ENCODE measurements at regions of chr1 and their contacts with region 1.

Region 1: DNA sequence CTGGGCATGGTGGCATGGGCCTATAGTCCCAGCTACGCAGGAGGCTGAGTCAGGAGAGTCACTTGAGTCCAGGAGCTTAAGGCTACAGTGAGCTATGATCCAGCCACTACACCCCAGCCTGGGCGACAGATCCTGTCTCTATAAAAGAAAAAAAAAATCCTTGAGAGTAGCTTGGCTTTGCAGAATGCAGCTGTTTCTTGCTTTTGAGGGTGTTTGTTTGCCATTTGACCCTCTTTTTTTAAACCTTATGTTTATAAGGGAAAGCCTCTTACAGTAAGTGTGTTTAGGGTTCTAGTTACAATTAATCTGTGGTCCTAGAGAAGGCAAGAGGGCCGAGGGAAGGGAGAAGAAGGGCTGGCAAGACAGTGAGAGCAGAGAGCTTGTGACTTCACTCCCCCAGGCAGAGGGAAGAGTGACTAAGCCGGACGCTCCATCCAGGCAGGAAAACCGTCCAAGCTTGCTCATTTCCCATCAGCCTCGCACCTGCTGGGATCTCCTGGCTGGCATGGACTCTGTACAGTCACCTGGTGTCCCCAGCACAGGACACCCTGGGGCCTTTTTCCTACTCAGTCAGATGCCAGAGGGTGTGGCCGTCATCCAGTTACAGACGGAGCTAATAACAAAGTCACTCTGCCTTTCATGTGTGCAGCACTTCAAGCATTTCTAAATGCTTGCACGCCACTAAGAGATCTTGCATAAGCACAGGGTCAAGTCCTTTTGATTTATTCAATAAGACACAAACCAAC is 55.5 kb upstream of the PSEN2 start:
- DNase-seq: peak; percentile 100
- H3K4me3 Mint-ChIP-seq: no peak overlapping the region
- H3K27ac Mint-ChIP-seq: peak overlapping the region; percentile 89
- H3K4me1 Mint-ChIP-seq: peaks cover 18% of the 10 kb centered on the region
- H3K27me3 Mint-ChIP-seq: no peaks in the 10 kb centered on the region
- CTCF ChIP-seq: no peak

Region 2: DNA sequence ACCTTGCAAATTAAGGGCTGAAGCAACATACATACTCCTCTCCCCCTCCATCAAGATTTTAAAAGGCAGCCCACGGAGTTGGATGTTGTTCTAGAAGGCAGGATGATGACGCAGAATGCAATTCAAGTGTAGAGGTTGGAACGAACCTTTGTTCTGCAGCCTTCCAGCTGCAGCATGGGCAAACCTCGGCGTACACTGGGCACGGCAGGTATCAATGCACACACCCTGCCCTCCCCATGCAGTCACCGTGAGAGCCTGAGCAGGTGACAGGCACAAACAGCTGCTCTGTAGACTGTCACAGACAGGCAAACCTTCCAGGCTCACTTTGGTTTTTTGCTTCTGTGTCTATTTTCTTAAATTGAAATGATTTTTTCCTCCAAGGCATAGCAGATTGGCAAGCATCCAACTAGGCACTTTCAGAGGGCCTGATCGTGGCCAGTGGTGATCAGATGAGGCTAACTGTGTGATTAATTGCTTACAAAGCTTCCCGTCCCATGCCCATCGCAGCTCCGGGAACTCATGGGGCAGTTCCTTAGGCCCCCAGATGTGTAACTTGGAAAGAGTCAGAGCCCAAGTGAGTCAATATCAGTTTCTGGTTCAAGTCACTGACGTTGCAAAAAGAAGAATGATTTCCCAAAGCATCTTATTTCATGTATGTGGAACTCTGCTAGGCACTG is 158.2 kb before region 1 on chr1:
- CTCF ChIA-PET with region 1: interaction called, 3 read pairs
- POLR2A ChIA-PET with region 1: interaction called, 33 read pairs
- intact Hi-C with region 1: no loop called
- DNase-seq: peak; percentile 98
- H3K4me3 Mint-ChIP-seq: peak overlapping the region; percentile 45
- H3K27ac Mint-ChIP-seq: peak overlapping the region; percentile 75
- H3K4me1 Mint-ChIP-seq: peaks cover 32% of the 10 kb centered on the region
- H3K27me3 Mint-ChIP-seq: no peaks in the 10 kb centered on the region
- CTCF ChIP-seq: no peak

Region 3: GRCh38 chr1:226702957-226703831 is 111.7 kb before region 1 on chr1:
- CTCF ChIA-PET with region 1: interaction called, 3 read pairs
- POLR2A ChIA-PET with region 1: interaction called, 22 read pairs
- intact Hi-C with region 1: no loop called
- DNase-seq: peak; percentile 75
- H3K4me3 Mint-ChIP-seq: peak overlapping the region; percentile 62
- H3K27ac Mint-ChIP-seq: peak overlapping the region; percentile 9
- H3K4me1 Mint-ChIP-seq: peaks cover 14% of the 10 kb centered on the region
- H3K27me3 Mint-ChIP-seq: no peaks in the 10 kb centered on the region
- CTCF ChIP-seq: no peak

Region 4: GRCh38 chr1:226763905-226764264 is 51.0 kb before region 1 on chr1:
- CTCF ChIA-PET with region 1: interaction called, 5 read pairs
- POLR2A ChIA-PET with region 1: interaction called, 65 read pairs
- intact Hi-C with region 1: no loop called
- DNase-seq: peak; percentile 97
- H3K4me3 Mint-ChIP-seq: no peak overlapping the region
- H3K27ac Mint-ChIP-seq: peak overlapping the region; percentile 4
- H3K4me1 Mint-ChIP-seq: peaks cover 37% of the 10 kb centered on the region
- H3K27me3 Mint-ChIP-seq: no peaks in the 10 kb centered on the region
- CTCF ChIP-seq: no peak

Region 5: DNA sequence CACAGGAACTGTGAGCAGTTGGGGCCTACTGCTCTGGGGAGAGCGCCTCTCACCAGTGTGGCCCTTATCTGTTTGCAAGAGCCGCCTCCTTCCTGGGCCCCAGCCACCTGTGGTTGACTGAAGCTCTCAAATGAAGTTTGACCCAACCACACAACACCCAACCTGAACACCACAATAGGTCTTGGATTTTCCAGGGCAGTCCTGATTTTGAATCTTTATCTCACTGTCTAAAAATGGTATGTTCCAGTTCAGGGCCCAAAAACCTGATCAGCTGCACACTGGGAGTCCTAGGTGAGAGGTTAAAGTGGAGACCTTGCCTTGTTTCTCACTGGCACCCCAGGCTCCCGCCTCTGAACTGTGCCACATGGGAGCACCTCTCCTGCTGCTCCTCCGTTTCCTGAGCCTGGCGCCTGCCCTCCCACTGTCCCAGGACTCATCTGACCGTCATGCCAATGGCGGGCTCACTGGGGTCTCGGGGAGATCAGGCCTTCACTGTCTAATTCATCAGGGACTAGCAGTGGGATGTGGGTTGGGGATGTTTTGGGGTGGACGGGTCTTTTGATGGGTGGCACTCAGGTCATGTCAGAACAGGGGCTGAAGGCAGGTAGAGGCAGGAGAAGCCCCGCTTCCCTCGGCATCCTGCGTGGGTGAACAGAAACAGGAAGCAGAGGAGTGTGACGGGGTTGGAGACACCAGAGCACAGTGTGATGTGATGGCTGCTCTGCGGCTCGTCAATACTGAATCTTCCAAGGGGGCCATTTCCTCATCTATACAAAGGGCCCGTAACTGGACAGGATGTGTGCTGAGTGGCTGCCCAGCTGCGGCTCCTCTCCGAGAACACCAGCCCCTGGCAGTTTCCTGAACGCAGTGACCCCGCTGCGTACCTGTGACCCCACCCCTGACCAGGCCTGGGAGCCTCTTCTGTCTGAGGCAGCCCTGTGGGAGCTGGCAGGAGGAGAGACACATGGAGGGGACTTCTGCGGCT is 16.2 kb before region 1 on chr1:
- CTCF ChIA-PET with region 1: interaction called, 6 read pairs
- POLR2A ChIA-PET with region 1: interaction called, 11 read pairs
- intact Hi-C with region 1: no loop called
- DNase-seq: no peak
- H3K4me3 Mint-ChIP-seq: no peak overlapping the region
- H3K27ac Mint-ChIP-seq: peak overlapping the region; percentile 32
- H3K4me1 Mint-ChIP-seq: no peaks in the 10 kb centered on the region
- H3K27me3 Mint-ChIP-seq: peaks cover 8% of the 10 kb centered on the region
- CTCF ChIP-seq: no peak

Region 6: GRCh38 chr1:226940029-226940805 is 125.3 kb after region 1 on chr1 and contains the start of gene COQ8A:
- CTCF ChIA-PET with region 1: interaction called, 3 read pairs
- POLR2A ChIA-PET with region 1: interaction called, 12 read pairs
- intact Hi-C with region 1: no loop called
- DNase-seq: peak; percentile 100
- H3K4me3 Mint-ChIP-seq: peak within 1 kb of the TSS; percentile 92
- H3K27ac Mint-ChIP-seq: peak within 1 kb of the TSS; percentile 93
- H3K4me1 Mint-ChIP-seq: peaks cover 43% of the 10 kb centered on the region
- H3K27me3 Mint-ChIP-seq: no peaks in the 10 kb centered on the region
- CTCF ChIP-seq: no peak
- total RNA-seq, gene COQ8A: 22.1 and 26.4 TPM in 2 replicates

Region 7: DNA sequence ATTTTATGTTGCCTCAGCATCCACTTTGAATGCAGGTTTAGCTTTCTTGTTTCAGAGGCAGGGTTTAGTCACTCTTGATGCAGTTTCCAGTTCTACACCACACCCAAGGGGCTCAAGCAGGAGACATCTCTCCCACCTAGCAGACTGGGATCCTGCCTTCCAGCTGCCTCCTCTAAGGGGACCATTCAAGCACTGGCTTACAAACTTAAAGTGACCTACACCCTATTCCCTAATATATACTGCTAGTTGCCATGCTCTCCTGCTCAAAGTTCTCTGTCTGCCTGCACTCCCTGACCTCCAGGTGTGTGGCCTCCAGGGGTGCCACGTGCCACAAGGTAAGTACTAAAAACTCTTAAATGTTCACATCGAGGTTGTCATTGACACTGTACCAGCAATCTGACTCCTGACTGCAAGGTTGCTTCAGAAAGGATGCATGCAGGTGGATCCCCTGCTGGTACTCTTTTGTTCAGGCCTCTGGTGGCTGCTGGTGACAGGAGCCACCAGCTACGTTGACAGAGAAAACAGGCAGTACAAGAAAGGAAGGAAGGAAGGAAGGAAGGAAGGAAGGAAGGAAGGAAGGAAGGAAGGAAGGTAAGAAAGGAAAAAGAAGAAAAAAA is 311.1 kb after region 1 on chr1:
- CTCF ChIA-PET with region 1: no interaction called
- POLR2A ChIA-PET with region 1: no interaction called
- intact Hi-C with region 1: no loop called
- DNase-seq: no peak
- H3K4me3 Mint-ChIP-seq: no peak overlapping the region
- H3K27ac Mint-ChIP-seq: no peak overlapping the region
- H3K4me1 Mint-ChIP-seq: peaks cover 11% of the 10 kb centered on the region
- H3K27me3 Mint-ChIP-seq: no peaks in the 10 kb centered on the region
- CTCF ChIP-seq: no peak

Measured in MCF 10A (cell line).